Testis (tissue), 5 donors: ENCODE measurements at regions of chr5 and their contacts with region 1.

Region 1: DNA sequence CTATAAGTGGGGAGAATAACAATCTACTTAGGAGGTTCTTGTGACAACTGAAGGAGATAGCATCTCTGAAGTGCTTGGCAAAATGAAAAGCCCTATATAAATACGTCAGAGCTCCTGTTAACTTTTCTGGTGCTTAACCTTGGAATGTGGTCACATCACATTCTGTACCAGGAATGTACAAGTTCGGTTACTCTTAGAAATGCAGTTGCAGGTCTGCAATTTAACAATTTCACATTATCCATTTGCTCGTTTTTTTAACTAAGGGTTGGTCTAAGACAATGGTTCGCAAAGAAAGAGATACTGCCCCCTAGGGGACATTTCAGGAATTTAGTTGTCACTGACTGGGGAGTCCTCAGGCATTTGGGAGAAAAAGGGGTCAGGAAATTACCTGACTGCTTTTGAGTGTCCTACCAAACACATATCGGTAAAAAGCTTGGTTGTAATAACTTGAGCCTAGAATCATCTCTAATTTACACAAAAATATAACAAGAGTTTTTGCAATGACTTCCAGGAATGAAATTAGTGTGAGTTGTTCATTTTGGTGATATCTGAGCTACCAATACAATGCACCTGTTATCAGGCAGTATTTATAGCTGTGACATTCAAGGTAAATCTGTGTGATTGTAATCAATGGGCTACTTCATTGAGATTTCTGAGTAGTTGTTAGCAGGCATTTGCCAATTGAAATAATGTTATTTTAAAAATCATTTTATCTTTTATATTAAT is 5.4 kb upstream of the HBEGF start:
- DNase-seq: peak; percentile 64
- H3K4me3 ChIP-seq: no peak overlapping the region
- H3K27ac ChIP-seq: no peak overlapping the region
- H3K4me1 ChIP-seq: peaks cover 7% of the 10 kb centered on the region
- H3K27me3 ChIP-seq: no peaks in the 10 kb centered on the region
- CTCF ChIP-seq: peak; percentile 89 to 95 (median 93)
- POLR2A ChIP-seq: no peak

Region 2: GRCh38 chr5:140244525-140245025 is 107.2 kb before region 1 on chr5:
- intact Hi-C with region 1: loop called (anchors 5 kb)
- DNase-seq: peak; percentile 95
- H3K4me3 ChIP-seq: no peak overlapping the region
- H3K27ac ChIP-seq: no peak overlapping the region
- H3K4me1 ChIP-seq: peaks cover 36% of the 10 kb centered on the region
- H3K27me3 ChIP-seq: no peaks in the 10 kb centered on the region
- CTCF ChIP-seq: peak; percentile 90 to 94 (median 90)
- POLR2A ChIP-seq: no peak